CD4-positive, alpha-beta memory T cell (primary cell): ENCODE measurements at regions of chrX and their contacts with region 1.

Region 1: GRCh38 chrX:107672955-107673378 is 44.7 kb downstream of the PRPS1 start:
- DNase-seq: peak; percentile 91 to 92 (median 92)
- H3K4me3 ChIP-seq: peak overlapping the region; percentile 36 to 70
- H3K4me3 Mint-ChIP-seq: peak overlapping the region; percentile 73 to 92 (median 84)
- H3K27ac ChIP-seq: peak overlapping the region; percentile 97
- H3K27ac Mint-ChIP-seq: peak overlapping the region; percentile 96 to 100 (median 99)
- H3K4me1 ChIP-seq: peaks cover 49% of the 10 kb centered on the region
- H3K4me1 Mint-ChIP-seq: peaks cover 26 to 58% (median 50%) of the 10 kb centered on the region in 4 donors
- H3K27me3 ChIP-seq: no peaks in the 10 kb centered on the region
- H3K27me3 Mint-ChIP-seq: no peaks in the 10 kb centered on the region

Region 2: DNA sequence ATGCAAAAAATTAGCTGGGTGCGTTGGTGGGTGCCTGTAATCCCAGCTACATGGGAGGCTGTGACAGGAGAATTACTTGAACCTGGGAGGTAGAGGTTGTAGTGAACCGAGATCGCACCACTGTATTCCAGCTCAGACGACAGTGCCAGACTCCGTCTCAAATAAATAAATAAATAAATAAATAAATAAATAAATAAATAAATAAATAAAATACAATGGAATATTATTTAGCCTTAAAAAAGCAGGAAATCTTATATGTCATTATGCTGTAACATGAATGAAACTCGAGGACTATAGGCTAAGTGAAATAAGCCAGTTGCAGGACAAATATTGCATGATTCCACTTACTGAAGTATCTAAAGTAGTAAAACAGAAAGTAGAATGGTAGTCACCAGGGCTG is 596.8 kb before region 1 on chrX:
- CTCF ChIA-PET with region 1: no interaction called
- POLR2A ChIA-PET with region 1: no interaction called
- intact Hi-C with region 1: no loop called
- DNase-seq: no peak
- H3K4me3 ChIP-seq: no peak overlapping the region
- H3K4me3 Mint-ChIP-seq: no peak overlapping the region
- H3K27ac ChIP-seq: no peak overlapping the region
- H3K27ac Mint-ChIP-seq: no peak overlapping the region
- H3K4me1 ChIP-seq: no peaks in the 10 kb centered on the region
- H3K4me1 Mint-ChIP-seq: peaks cover 0 to 2% (median under 1%) of the 10 kb centered on the region in 4 donors
- H3K27me3 ChIP-seq: no peaks in the 10 kb centered on the region
- H3K27me3 Mint-ChIP-seq: no peaks in the 10 kb centered on the region

Region 3: GRCh38 chrX:107154787-107155620 is 518.0 kb before region 1 on chrX:
- CTCF ChIA-PET with region 1: no interaction called
- POLR2A ChIA-PET with region 1: no interaction called
- intact Hi-C with region 1: no loop called
- DNase-seq: peak in 1 of 5 donors; percentile 23
- H3K4me3 ChIP-seq: no peak overlapping the region
- H3K4me3 Mint-ChIP-seq: peak overlapping the region; percentile 70 to 85 (median 81)
- H3K27ac ChIP-seq: no peak overlapping the region
- H3K27ac Mint-ChIP-seq: peak overlapping the region in 1 of 7 donors; percentile 42
- H3K4me1 ChIP-seq: no peaks in the 10 kb centered on the region
- H3K4me1 Mint-ChIP-seq: peaks cover 0 to 12% (median 2%) of the 10 kb centered on the region in 4 donors
- H3K27me3 ChIP-seq: no peaks in the 10 kb centered on the region
- H3K27me3 Mint-ChIP-seq: no peaks in the 10 kb centered on the region

Region 4: DNA sequence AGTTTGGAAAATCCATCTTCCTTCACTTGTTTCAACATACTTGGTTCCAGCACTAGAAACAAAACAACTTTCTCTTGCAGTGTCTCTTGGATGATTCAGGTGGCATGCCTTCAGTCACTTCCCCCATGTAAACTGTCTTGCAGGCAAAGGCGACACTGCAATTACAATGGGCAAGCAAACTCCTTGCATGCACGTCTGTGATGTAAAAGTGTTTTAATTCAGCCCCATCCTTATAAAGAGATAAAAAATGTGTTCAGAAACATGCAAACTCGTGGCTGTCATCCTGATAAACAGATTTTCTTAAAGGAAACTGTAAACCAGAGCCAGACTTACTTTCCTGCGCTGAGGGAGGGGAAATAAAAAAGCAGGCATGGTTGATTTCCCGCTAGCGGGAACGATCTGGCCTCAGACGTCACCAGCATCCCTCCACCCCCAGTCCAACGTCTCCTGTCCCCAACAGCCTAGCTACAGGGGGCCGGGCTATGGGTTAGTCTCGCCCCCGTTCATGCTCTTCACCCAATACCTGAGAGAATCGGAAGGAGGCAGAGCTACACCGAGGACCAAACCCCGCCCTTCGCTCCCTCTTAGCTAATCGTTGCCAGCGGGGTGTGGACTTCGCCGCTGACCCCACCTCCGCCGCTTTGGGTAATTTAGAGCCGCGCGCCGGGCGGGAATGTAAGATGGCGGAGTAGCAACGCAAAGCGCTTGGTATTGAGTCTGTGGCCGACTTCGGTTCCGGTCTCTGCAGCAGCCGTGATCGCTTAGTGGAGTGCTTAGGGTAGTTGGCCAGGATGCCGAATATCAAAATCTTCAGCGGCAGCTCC is 44.9 kb before region 1 on chrX and contains the start of gene PRPS1:
- CTCF ChIA-PET with region 1: interaction called, 12 read pairs
- POLR2A ChIA-PET with region 1: interaction called, 29 read pairs
- intact Hi-C with region 1: no loop called
- DNase-seq: peak; percentile 84 to 93 (median 89)
- H3K4me3 ChIP-seq: peak within 1 kb of the TSS; percentile 79 to 86
- H3K4me3 Mint-ChIP-seq: peak within 1 kb of the TSS; percentile 85 to 99 (median 95)
- H3K27ac ChIP-seq: peak within 1 kb of the TSS; percentile 73
- H3K27ac Mint-ChIP-seq: peak within 1 kb of the TSS; percentile 94 to 96 (median 95)
- H3K4me1 ChIP-seq: peaks cover 31% of the 10 kb centered on the region
- H3K4me1 Mint-ChIP-seq: peaks cover 16 to 46% (median 29%) of the 10 kb centered on the region in 4 donors
- H3K27me3 ChIP-seq: no peaks in the 10 kb centered on the region
- H3K27me3 Mint-ChIP-seq: no peaks in the 10 kb centered on the region
- total RNA-seq, gene PRPS1: 56.1 to 61.3 TPM

Region 5: DNA sequence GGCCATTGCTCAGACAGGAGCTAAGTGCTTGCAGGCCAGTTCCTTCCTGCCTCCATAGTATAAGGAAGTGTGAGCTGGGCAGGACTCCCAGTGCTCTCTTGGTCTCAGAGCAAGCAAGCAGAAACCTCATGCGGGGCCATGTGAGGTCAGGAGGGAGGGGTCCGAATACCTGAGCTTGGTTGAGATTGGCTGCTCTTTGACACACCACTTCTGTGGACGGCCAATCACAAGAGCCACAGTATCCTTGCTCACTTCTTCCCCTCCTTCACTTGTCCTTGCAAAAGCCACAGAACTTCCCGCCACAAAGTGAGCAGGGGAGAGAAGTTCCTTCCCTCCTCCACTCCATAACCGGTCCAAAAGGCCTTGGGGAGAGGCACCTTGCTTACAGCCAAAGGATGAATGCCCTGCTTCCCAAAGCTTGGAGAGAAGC is 12.0 kb after region 1 on chrX:
- CTCF ChIA-PET with region 1: interaction called, 7 read pairs
- POLR2A ChIA-PET with region 1: interaction called, 33 read pairs
- intact Hi-C with region 1: no loop called
- DNase-seq: no peak
- H3K4me3 ChIP-seq: no peak overlapping the region
- H3K4me3 Mint-ChIP-seq: peak overlapping the region in 2 of 8 donors; percentile 6 to 31
- H3K27ac ChIP-seq: no peak overlapping the region
- H3K27ac Mint-ChIP-seq: peak overlapping the region in 5 of 7 donors; percentile 35 to 82 (median 63)
- H3K4me1 ChIP-seq: peaks cover 39% of the 10 kb centered on the region
- H3K4me1 Mint-ChIP-seq: peaks cover 29 to 64% (median 45%) of the 10 kb centered on the region in 4 donors
- H3K27me3 ChIP-seq: no peaks in the 10 kb centered on the region
- H3K27me3 Mint-ChIP-seq: no peaks in the 10 kb centered on the region

Region 6: DNA sequence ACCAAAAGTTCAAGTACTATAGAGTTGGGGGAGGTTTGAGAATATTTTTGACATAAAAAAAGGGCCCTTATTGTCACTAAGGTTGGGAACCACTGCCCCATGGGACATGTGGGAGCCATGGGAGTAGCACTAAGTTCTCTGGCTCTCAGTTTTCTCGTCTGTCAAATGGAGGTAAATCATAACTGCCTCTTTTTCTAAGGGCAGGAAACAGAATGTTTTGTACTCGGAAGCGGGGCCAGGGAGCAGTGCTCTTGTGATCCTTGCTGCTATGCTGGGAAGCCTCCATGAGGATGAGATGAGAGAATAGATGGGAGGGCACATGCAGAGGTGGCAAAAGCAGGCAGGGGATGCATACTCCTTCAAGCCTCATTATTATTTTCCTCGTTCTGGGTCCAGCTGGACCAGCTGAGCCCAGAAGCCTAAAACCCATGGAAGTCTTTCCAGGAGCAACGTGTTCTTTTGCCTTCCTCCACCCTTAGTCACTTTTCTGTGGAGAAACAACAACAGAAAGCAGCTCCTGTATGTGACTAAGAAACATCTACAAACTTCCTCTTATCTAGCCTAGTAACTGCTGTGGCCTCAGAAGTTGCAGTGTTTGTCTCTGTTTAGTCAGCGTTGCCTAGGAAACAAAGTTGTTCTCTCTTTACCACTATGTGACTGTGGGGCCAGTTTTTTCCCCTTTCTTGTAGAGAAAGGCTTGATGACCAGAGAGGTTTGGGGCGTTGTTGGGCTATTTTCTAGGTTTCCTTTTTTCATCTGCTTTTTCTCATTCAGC is 37.8 kb after region 1 on chrX:
- CTCF ChIA-PET with region 1: interaction called, 462 read pairs
- POLR2A ChIA-PET with region 1: interaction called, 1,740 read pairs
- intact Hi-C with region 1: loop called (anchors 1 kb)
- DNase-seq: peak; percentile 89 to 93 (median 91)
- H3K4me3 ChIP-seq: peak overlapping the region; percentile 29 to 46
- H3K4me3 Mint-ChIP-seq: peak overlapping the region; percentile 75 to 96 (median 86)
- H3K27ac ChIP-seq: peak overlapping the region; percentile 95
- H3K27ac Mint-ChIP-seq: peak overlapping the region; percentile 99 to 100 (median 100)
- H3K4me1 ChIP-seq: peaks cover 65% of the 10 kb centered on the region
- H3K4me1 Mint-ChIP-seq: peaks cover 36 to 82% (median 60%) of the 10 kb centered on the region in 4 donors
- H3K27me3 ChIP-seq: no peaks in the 10 kb centered on the region
- H3K27me3 Mint-ChIP-seq: no peaks in the 10 kb centered on the region

Region 7: DNA sequence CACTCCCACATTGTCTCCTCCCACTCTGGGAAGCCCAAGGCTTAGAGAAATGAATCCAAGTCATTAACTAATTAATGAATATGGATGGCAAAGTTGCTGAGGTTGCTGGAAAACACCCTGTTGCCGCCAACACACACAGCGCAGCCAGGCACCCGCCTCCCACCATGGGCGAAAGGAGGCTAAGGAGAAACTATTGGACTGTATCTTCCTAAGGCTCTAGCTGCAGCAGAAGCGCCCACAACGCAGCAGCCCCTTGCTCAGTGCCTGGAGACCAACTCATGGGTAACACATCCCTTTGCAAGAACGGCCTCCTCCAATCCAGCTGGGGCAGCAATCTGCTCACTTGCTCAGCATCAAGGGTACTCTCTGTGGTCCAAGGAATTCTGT is 68.4 kb after region 1 on chrX:
- CTCF ChIA-PET with region 1: interaction called, 20 read pairs
- POLR2A ChIA-PET with region 1: interaction called, 142 read pairs
- intact Hi-C with region 1: loop called (anchors 1 kb)
- DNase-seq: peak in 1 of 5 donors; percentile 43
- H3K4me3 ChIP-seq: peak overlapping the region in 1 of 2 donors; percentile 41
- H3K4me3 Mint-ChIP-seq: peak overlapping the region; percentile 64 to 95 (median 85)
- H3K27ac ChIP-seq: peak overlapping the region; percentile 52
- H3K27ac Mint-ChIP-seq: peak overlapping the region; percentile 95 to 100 (median 98)
- H3K4me1 ChIP-seq: peaks cover 48% of the 10 kb centered on the region
- H3K4me1 Mint-ChIP-seq: peaks cover 23 to 49% (median 33%) of the 10 kb centered on the region in 4 donors
- H3K27me3 ChIP-seq: no peaks in the 10 kb centered on the region
- H3K27me3 Mint-ChIP-seq: peaks cover 0 to 4% of the 10 kb centered on the region in 2 donors

Region 8: GRCh38 chrX:108020631-108021030 is 347.7 kb after region 1 on chrX:
- CTCF ChIA-PET with region 1: no interaction called
- POLR2A ChIA-PET with region 1: interaction called, 5 read pairs
- intact Hi-C with region 1: loop called (anchors 5 kb)
- DNase-seq: peak in 4 of 5 donors; percentile 24 to 49 (median 33)
- H3K4me3 ChIP-seq: peak overlapping the region; percentile 26 to 36
- H3K4me3 Mint-ChIP-seq: peak overlapping the region; percentile 79 to 95 (median 90)
- H3K27ac ChIP-seq: peak overlapping the region; percentile 44
- H3K27ac Mint-ChIP-seq: peak overlapping the region; percentile 76 to 99 (median 96)
- H3K4me1 ChIP-seq: peaks cover 72% of the 10 kb centered on the region
- H3K4me1 Mint-ChIP-seq: peaks cover 47 to 93% (median 73%) of the 10 kb centered on the region in 4 donors
- H3K27me3 ChIP-seq: no peaks in the 10 kb centered on the region
- H3K27me3 Mint-ChIP-seq: no peaks in the 10 kb centered on the region

Region 9: DNA sequence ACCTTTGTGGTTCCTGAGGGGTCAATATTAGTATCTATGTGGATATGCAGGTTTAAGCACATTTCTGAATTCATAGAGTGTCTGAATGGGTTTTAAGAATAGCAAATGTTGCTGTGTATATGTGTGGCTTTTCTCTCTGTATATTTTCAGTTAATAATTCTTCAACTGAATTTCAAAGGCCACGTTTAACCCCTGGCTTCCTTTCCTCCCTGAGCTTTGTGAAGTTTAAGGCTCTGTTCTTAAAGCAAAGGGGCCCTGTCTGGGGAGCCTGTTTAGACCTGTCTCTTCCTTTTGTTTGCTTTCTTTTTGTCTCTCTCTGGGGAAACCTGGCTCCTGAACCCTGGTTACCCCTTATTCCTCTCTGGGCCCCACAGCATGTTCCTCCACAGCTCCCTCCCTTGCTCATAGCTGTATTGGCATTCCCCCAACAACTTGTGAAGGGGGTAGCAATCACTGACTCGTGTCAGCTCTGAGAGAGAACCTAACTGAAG is 626.2 kb after region 1 on chrX:
- CTCF ChIA-PET with region 1: no interaction called
- POLR2A ChIA-PET with region 1: no interaction called
- intact Hi-C with region 1: no loop called
- DNase-seq: no peak
- H3K4me3 ChIP-seq: no peak overlapping the region
- H3K4me3 Mint-ChIP-seq: no peak overlapping the region
- H3K27ac ChIP-seq: no peak overlapping the region
- H3K27ac Mint-ChIP-seq: no peak overlapping the region
- H3K4me1 ChIP-seq: no peaks in the 10 kb centered on the region
- H3K4me1 Mint-ChIP-seq: no peaks in the 10 kb centered on the region
- H3K27me3 ChIP-seq: no peaks in the 10 kb centered on the region
- H3K27me3 Mint-ChIP-seq: peaks cover 0 to 2% of the 10 kb centered on the region in 2 donors